ENCODE measurements at regions of chr2 and their contacts with region 1.

Region 1: GRCh38 chr2:6011921-6012320 is 319.7 kb downstream of the SOX11 start:
- DNase-seq: no peak
- ATAC-seq: no peak
- H3K4me3 ChIP-seq: no peak overlapping the region
- H3K27ac ChIP-seq: no peak overlapping the region
- H3K4me1 ChIP-seq: no peaks in the 10 kb centered on the region
- H3K27me3 ChIP-seq: no peaks in the 10 kb centered on the region
- CTCF ChIP-seq: no peak
- POLR2A ChIP-seq: no peak

Region 2: GRCh38 chr2:6031200-6031867 is 19.4 kb after region 1 on chr2:
- in situ Hi-C with region 1: no loop called
- intact Hi-C with region 1: loop called (anchors 1 kb)
- DNase-seq: no peak
- ATAC-seq: no peak
- H3K4me3 ChIP-seq: no peak overlapping the region
- H3K27ac ChIP-seq: no peak overlapping the region
- H3K4me1 ChIP-seq: no peaks in the 10 kb centered on the region
- H3K27me3 ChIP-seq: no peaks in the 10 kb centered on the region
- CTCF ChIP-seq: no peak
- POLR2A ChIP-seq: no peak

Region 3: DNA sequence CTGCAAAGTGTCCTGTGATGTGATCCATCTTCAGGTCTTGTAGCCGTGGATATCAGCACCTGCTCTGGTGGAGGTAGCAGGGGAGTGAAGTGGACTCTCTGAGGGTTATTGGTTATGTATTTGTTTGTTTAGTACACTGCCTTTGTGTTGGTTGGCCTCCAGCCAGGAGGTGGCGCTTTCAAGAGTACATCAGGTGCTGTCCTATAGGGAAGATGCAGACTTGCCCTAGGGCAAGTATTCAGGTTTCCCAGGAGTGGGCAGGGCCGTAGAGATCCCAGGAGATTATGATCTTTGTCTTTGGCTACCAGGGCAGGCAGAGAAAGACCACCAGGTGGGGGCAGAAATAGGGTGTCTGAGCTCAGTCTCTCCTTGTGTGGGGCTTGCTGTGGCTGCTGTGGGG is 92.0 kb after region 1 on chr2:
- in situ Hi-C with region 1: no loop called
- intact Hi-C with region 1: no loop called
- DNase-seq: no peak
- ATAC-seq: no peak
- H3K4me3 ChIP-seq: no peak overlapping the region
- H3K27ac ChIP-seq: no peak overlapping the region
- H3K4me1 ChIP-seq: no peaks in the 10 kb centered on the region
- H3K27me3 ChIP-seq: no peaks in the 10 kb centered on the region
- CTCF ChIP-seq: no peak
- POLR2A ChIP-seq: no peak

Measured in gastrocnemius medialis (tissue), 4 donors.